ENCODE measurements at regions of chr16 and their contacts with region 1.

Region 1: DNA sequence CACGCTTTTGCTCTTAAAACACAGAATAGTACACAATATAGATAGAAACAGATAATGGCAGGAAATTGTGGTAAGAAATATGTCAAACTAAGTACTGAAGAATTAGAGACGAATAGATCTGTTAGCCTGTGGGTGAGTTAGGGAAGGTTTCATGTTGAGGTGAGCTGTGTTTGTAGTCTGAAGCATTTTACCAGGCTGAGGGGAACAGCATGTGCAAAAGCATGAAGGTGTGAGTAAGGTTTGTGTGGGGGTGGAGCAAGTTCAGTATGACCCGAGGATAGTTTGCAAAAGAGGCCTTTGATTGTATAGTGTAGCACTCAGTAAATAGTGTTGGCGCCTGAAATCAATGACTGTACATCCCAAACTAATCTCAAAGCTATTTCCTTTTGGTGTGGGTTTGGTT is 13.8 kb downstream of the IGSF6 start:
- DNase-seq: no peak
- H3K4me3 ChIP-seq: no peak overlapping the region
- H3K27ac ChIP-seq: no peak overlapping the region
- H3K4me1 ChIP-seq: no peaks in the 10 kb centered on the region
- H3K27me3 ChIP-seq: no peaks in the 10 kb centered on the region
- CTCF ChIP-seq: no peak
- EP300 ChIP-seq: no peak
- POLR2A ChIP-seq: no peak
- RAD21 ChIP-seq: no peak

Region 2: GRCh38 chr16:21526923-21527807 is 111.4 kb before region 1 on chr16:
- CTCF ChIA-PET with region 1: no interaction called
- POLR2A ChIA-PET with region 1: no interaction called
- DNase-seq: no peak
- H3K4me3 ChIP-seq: no peak overlapping the region
- H3K27ac ChIP-seq: no peak overlapping the region
- H3K4me1 ChIP-seq: peaks cover 0 to 19% (median 9%) of the 10 kb centered on the region in 4 experiments; a peak in 6 of 7 replicates
- H3K27me3 ChIP-seq: no peaks in the 10 kb centered on the region
- CTCF ChIP-seq: no peak
- EP300 ChIP-seq: no peak
- POLR2A ChIP-seq: no peak
- RAD21 ChIP-seq: no peak

Region 3: DNA sequence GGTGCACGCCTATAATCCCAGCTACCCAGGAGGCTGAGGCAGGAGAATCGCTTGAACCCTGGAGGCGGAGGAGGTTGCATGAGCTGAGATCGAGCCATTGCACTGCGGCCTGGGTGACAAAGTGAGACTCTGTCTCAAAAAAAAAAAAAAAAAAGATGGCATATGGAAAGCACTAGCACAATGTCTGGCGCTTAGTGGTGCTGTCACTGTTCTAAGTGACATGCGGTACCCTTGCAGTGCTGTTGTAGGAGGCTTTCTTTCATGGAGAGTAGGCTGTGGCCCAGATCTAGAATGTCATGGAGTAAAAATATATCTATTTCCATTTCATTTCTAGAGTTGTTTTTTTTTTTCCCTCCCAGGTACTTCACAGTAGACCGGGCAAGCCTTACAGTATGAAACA is 53.8 kb before region 1 on chr16:
- CTCF ChIA-PET with region 1: interaction called, 26 read pairs
- POLR2A ChIA-PET with region 1: no interaction called
- DNase-seq: no peak
- H3K4me3 ChIP-seq: no peak overlapping the region
- H3K27ac ChIP-seq: no peak overlapping the region
- H3K4me1 ChIP-seq: no peaks in the 10 kb centered on the region
- H3K27me3 ChIP-seq: no peaks in the 10 kb centered on the region
- CTCF ChIP-seq: no peak
- EP300 ChIP-seq: no peak
- POLR2A ChIP-seq: no peak
- RAD21 ChIP-seq: no peak